Psoas muscle (tissue), 8 donors: ENCODE measurements at regions of chr3 and their contacts with region 1.

Region 1: GRCh38 chr3:100463002-100463401 is 29.4 kb upstream of the TMEM45A start:
- DNase-seq: no peak
- ATAC-seq: peak; percentile 68 to 90 (median 76)
- H3K4me3 ChIP-seq: no peak overlapping the region
- H3K27ac ChIP-seq: no peak overlapping the region
- H3K4me1 ChIP-seq: no peaks in the 10 kb centered on the region
- H3K27me3 ChIP-seq: no peaks in the 10 kb centered on the region
- CTCF ChIP-seq: peak; percentile 64

Region 2: DNA sequence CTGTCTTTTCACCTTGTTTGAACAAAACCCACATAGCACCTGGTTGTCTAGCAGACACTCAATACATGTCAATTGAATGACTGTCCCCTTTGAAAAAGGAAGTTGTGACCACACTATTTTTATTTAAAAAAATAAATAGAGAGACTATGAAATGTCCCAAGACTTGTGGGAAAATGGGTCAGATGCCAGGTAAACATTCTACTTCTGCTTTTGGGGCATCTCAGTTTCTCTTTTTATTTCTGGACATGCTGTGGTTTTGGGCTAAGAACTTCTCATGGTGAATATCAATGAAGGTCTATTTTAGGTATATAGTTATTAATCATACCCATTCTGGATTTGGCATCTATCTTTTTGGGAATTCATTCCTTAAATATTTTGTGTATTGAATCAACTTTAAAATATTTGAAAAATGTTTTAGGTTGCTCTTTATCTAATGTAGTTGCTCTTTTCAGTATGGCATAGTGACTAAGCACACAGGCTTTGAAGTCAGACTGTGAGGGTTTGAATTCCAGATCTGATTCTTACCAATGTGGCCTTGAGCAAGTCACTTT is 33.8 kb after region 1 on chr3:
- intact Hi-C with region 1: loop called in 1 of 2 experiments (anchors 1 kb)
- DNase-seq: no peak
- ATAC-seq: no peak
- H3K4me3 ChIP-seq: no peak overlapping the region
- H3K27ac ChIP-seq: no peak overlapping the region
- H3K4me1 ChIP-seq: no peaks in the 10 kb centered on the region
- H3K27me3 ChIP-seq: no peaks in the 10 kb centered on the region
- CTCF ChIP-seq: no peak

Region 3: DNA sequence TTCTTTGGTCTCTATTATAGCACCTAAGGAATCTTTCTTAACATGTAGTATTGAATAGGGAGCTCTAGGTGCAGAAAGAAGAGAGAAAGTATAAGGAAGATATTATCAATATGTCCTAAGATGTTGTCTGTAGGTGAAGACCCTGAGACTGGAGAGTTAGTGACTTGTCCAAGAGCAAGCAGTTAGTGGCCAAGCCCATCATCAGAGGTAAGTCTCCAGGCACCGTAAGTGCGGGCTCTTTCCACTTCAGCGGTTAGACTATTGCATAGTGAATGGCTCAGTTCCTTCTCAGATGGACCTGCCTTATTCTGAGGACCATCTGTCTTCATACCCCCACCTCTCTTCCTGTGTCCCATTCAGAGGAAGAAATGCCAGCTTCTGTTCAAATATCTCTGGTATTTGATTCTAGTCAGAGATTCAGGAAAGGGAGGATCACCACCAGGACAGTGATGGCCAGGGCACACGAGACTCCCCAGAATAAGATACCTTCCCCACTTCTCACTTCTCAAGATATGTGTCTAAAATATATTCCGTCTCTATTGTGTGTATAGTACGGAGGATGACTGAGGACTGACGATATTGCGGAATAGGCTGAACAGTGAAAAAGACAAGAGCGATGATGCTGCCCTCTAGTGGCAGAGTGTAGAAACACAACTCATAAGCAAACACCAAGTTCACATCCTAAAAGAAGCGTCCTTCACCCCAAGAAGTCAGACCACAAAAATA is 127.3 kb after region 1 on chr3:
- intact Hi-C with region 1: loop called (anchors 2 to 5 kb)
- DNase-seq: no peak
- ATAC-seq: peak; percentile 81 to 93 (median 83)
- H3K4me3 ChIP-seq: peak overlapping the region; percentile 32
- H3K27ac ChIP-seq: no peak overlapping the region
- H3K4me1 ChIP-seq: no peaks in the 10 kb centered on the region
- H3K27me3 ChIP-seq: no peaks in the 10 kb centered on the region
- CTCF ChIP-seq: peak; percentile 91

Region 4: GRCh38 chr3:100796556-100796955 is 333.6 kb after region 1 on chr3:
- intact Hi-C with region 1: loop called in 1 of 2 experiments (anchors 10 kb)
- DNase-seq: no peak
- ATAC-seq: peak in 1 of 4 donors; percentile 68
- H3K4me3 ChIP-seq: no peak overlapping the region
- H3K27ac ChIP-seq: no peak overlapping the region
- H3K4me1 ChIP-seq: no peaks in the 10 kb centered on the region
- H3K27me3 ChIP-seq: no peaks in the 10 kb centered on the region
- CTCF ChIP-seq: peak; percentile 37

Region 5: DNA sequence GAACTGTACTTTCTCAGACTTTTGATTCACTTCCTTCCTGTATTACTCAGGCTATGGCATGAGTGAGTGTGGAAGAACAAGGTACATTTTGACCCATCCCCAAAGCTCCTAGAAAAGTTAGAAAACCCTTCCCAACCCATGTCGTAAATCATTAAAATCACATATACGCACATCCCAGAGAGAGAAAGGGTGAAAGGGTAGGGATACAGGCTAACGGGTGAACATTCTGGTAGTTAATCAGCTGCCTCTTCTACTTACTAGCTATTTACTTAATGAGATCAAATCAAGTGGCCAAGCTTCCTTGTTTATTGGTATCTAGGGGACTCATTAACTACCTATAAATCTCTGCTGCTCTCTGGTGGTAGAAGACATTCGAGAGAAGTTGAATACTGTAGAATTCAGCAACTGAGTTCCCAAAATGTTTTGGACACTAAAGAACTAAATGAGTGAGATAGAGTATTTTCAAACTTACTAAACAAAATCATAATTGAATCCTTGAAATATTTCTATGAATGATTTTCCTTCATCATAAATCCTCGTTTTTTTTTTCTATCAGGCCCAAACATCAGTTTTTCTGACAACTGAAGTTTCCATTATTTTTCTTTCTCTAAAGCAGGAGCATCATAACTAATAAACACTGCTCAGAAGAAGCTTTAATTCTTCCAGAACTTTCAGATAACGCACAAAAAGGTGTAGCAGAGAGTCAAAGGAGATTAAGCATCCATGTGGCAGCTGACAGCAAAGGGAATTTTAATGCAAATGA is 733.1 kb after region 1 on chr3:
- intact Hi-C with region 1: loop called in 1 of 2 experiments (anchors 5 kb)
- DNase-seq: no peak
- ATAC-seq: peak; percentile 36 to 73 (median 52)
- H3K4me3 ChIP-seq: no peak overlapping the region
- H3K27ac ChIP-seq: no peak overlapping the region
- H3K4me1 ChIP-seq: no peaks in the 10 kb centered on the region
- H3K27me3 ChIP-seq: no peaks in the 10 kb centered on the region
- CTCF ChIP-seq: peak; percentile 58